Right cardiac atrium (tissue), 5 donors: ENCODE measurements at regions of chr2 and their contacts with region 1.

Region 1: DNA sequence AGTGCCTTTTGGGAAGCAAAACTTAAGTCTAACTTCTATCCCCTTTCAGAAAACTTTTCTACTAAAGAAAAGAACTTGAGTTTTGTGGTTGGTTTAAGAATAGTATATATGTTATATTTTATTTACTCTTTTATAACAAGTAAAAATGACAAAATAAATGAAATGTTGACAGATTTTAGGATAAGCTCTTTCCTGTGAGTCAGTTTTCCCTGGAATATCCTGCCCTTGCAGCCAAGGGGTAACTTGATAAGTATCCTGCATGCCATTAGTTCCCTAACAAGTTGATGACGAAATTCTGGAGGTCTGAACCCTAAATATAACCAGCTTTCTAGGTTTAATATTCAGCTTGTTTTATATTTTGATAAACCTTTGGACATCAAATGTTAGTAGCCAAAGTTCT is 7.3 kb upstream of the HTR2B start:
- DNase-seq: no peak
- ATAC-seq: peak in 1 of 2 donors; percentile 78
- H3K4me3 ChIP-seq: no peak overlapping the region
- H3K27ac ChIP-seq: no peak overlapping the region
- H3K4me1 ChIP-seq: peaks cover 2% of the 10 kb centered on the region
- H3K27me3 ChIP-seq: no peaks in the 10 kb centered on the region

Region 2: DNA sequence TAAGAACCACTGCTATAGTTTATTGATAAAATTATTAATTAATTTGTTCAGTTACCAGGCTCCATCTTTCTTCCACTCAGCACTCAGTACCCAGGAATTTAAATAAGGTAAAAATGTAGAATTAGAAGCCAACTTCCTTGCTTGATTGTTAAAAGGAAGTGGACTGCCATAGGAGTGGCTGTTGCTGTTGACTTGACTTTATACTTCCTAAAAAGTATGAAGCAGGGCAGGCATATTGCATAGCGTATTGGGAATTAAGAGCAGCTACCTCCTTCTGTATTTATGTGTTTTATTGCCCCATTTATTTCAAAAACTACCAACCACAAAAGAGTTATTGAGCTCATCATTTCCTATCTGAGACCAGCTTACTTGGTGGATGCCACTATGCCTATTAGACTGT is 47.6 kb before region 1 on chr2:
- intact Hi-C with region 1: no loop called
- DNase-seq: no peak
- ATAC-seq: no peak
- H3K4me3 ChIP-seq: no peak overlapping the region
- H3K27ac ChIP-seq: no peak overlapping the region
- H3K4me1 ChIP-seq: no peaks in the 10 kb centered on the region
- H3K27me3 ChIP-seq: no peaks in the 10 kb centered on the region

Region 3: GRCh38 chr2:231170055-231170454 is 37.9 kb after region 1 on chr2:
- intact Hi-C with region 1: loop called in 1 of 4 experiments (anchors 5 kb)
- DNase-seq: no peak
- ATAC-seq: no peak
- H3K4me3 ChIP-seq: no peak overlapping the region
- H3K27ac ChIP-seq: no peak overlapping the region
- H3K4me1 ChIP-seq: no peaks in the 10 kb centered on the region
- H3K27me3 ChIP-seq: no peaks in the 10 kb centered on the region